OCI-LY7 (cell line): ENCODE measurements at regions of chr2 and their contacts with region 1.

Region 1: GRCh38 chr2:169384816-169385215 is 22.5 kb upstream of the LRP2 start:
- DNase-seq: no peak
- H3K4me3 ChIP-seq: no peak overlapping the region
- H3K27ac ChIP-seq: no peak overlapping the region
- H3K4me1 ChIP-seq: no peaks in the 10 kb centered on the region
- CTCF ChIP-seq: no peak

Region 2: GRCh38 chr2:169507698-169508097 is 122.9 kb after region 1 on chr2:
- CTCF ChIA-PET with region 1: no interaction called
- POLR2A ChIA-PET with region 1: no interaction called
- intact Hi-C with region 1: no loop called
- DNase-seq: no peak
- H3K4me3 ChIP-seq: no peak overlapping the region
- H3K27ac ChIP-seq: no peak overlapping the region
- H3K4me1 ChIP-seq: no peaks in the 10 kb centered on the region
- CTCF ChIP-seq: no peak

Region 3: DNA sequence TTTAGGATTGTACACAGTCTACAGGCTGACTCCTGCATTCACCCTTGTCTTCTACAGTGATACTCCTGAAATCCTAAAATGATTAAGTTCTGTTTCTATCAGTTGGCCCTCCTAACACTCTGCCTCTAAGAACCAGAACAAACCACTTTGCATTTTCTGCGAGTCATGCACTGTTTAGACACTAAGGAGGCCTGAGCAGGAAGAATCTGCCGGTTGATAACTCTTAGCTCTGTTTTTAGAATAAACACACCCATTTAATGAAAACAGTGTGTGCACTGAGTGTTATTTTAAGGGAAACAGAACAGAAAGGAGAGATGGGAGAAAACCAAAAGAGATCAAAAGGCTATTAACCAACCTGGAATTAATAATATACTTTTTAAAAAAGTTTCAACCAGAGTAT is 390.9 kb after region 1 on chr2:
- CTCF ChIA-PET with region 1: no interaction called
- POLR2A ChIA-PET with region 1: interaction called, 10 read pairs
- intact Hi-C with region 1: no loop called
- DNase-seq: no peak
- H3K4me3 ChIP-seq: no peak overlapping the region
- H3K27ac ChIP-seq: no peak overlapping the region
- H3K4me1 ChIP-seq: no peaks in the 10 kb centered on the region
- CTCF ChIP-seq: no peak